HCT116 (cell line): ENCODE measurements at regions of chr6 and their contacts with region 1.

Region 1: DNA sequence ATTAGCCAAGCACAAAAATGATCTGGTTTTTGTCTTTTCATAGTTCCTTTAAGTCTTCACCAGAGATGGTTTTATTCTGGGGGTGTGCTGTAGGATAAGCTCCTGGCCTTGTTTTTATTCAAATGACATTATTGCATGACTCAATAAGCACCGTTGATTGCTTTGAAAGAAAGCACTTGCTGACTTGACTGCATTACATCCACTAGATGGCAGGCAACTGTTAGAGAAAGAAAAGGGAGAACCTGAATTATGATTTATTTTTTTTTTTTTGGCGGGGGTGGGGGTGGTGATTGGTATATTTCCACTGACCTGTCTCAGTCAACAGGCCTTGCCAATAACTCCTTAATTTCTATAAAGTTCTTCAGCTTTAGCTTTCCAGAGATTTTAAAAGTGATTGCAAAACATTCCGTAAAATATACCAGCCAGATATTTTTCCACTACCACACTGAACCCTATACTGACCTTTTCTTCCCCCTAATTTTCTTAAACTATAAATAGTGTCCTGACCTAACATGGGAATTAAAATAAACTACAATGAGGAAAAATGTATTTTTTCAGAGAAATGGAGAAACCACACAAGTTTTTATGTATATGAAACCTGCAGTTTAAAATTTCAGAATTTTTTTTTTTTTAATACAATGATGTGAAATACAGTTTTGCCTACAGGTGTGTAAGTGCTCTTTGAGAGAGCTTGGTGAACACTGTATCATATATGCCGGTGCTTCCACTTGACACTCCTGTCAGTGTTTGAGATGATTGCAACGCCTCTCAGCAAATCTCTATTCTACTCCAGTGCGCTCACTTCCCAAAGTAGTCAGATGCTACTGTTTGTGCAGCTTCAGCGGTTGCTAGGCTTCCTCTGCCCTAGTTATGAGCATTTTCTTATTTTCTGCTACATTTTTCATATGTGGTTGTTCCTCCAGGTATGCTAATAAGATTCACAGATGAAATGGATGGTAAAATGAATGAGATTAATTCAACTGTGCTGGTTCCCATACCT is 274.3 kb downstream of the CD109 start:
- DNase-seq: peak; percentile 74
- ATAC-seq: peak; percentile 78
- H3K4me3 ChIP-seq: no peak overlapping the region
- H3K27ac ChIP-seq: no peak overlapping the region
- H3K4me1 ChIP-seq: peaks cover 0 to 5% of the 10 kb centered on the region in 2 experiments; a peak in 2 of 4 replicates
- H3K27me3 ChIP-seq: no peaks in the 10 kb centered on the region
- CTCF ChIP-seq: peak; percentile 63 to 84 (median 64)
- POLR2A ChIP-seq: no peak
- RAD21 ChIP-seq: peak; percentile 82

Region 2: GRCh38 chr6:74404366-74404765 is 434.1 kb after region 1 on chr6:
- CTCF ChIA-PET with region 1: no interaction called
- POLR2A ChIA-PET with region 1: no interaction called
- RAD21 ChIA-PET with region 1: no interaction called
- intact Hi-C with region 1: loop called (anchors 10 kb)
- DNase-seq: no peak
- ATAC-seq: no peak
- H3K4me3 ChIP-seq: no peak overlapping the region
- H3K27ac ChIP-seq: no peak overlapping the region
- H3K4me1 ChIP-seq: no peaks in the 10 kb centered on the region
- H3K27me3 ChIP-seq: no peaks in the 10 kb centered on the region
- CTCF ChIP-seq: no peak
- POLR2A ChIP-seq: no peak
- RAD21 ChIP-seq: no peak

Region 3: DNA sequence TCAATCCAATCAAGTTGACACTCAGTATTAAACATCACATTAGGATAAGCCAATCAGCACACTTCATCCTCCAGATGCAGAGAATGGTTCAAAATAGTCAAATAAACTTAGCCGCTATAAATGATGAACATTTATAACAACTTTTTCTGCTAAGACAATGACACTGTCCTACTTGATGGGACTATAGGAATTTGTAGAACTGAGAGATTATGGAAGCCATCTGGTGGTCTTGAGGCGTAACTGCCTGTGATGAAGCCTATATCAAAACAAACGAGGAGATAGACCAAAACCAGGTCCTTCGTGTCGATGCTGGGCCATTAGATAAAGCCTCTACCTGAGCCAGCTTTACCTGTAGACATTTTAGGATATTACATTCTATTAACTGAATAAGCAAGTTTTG is 604.5 kb after region 1 on chr6:
- CTCF ChIA-PET with region 1: no interaction called
- POLR2A ChIA-PET with region 1: no interaction called
- RAD21 ChIA-PET with region 1: no interaction called
- intact Hi-C with region 1: loop called (anchors 5 kb)
- DNase-seq: peak; percentile 24
- ATAC-seq: peak; percentile 90
- H3K4me3 ChIP-seq: no peak overlapping the region
- H3K27ac ChIP-seq: no peak overlapping the region
- H3K4me1 ChIP-seq: no peaks in the 10 kb centered on the region
- H3K27me3 ChIP-seq: no peaks in the 10 kb centered on the region
- CTCF ChIP-seq: peak; percentile 35 to 67 (median 64); a peak in 5 of 6 replicates
- POLR2A ChIP-seq: no peak
- RAD21 ChIP-seq: peak; percentile 56